Activated T-helper 1 cell treated with anti-CD3 and anti-CD28 coated beads, Interleukin-12 subunit alpha, Interleukin-12 subunit beta, Interleukin-2, Interleukin-4 antibody, amounts not matched to agents 30 ng/mL and 10 ng/mL and 1 ng/mL, durations not matched to agents 14 hours and 24 hours and 36 hours (primary cell): ENCODE measurements at regions of chr12 and their contacts with region 1.

Region 1: DNA sequence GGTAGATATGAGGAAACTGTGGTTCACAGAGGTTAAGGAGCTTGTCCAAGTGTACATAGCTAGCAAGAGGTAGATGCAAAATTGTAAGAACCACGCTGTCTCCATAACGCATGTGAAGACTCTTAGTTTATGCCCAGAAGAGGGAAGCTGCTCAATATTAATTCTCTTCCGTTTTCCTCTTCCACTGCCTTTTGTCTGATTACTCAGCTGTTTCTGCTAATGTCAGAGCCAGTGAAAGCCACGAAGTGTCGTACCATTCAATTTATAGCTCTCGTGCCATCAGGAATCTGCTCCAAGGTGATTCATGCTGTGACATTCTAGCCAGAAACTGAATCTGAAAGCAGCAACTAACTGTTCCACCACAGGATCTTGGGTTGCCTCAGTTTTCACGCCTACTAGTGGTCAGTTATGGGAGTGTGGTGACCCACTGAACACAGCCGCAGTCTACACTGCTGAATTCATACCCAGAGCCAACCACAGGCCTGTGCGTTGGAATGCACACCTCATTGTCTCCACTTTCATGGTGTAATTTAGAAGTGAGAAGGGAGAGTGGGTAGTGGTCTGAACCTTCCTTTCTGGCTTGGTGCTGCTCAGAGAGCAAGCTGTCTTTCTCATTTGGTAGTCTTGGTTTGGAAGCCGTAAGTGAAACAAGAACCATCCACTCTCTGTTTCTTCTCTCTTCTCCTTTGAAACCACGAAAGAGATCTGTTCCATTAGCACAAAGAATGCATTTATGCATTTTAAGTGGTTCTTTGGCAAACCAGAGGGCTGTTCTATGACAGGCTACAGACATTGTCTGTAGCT is 74.2 kb upstream of the NAP1L1 start:
- DNase-seq: peak; percentile 67
- H3K4me3 Mint-ChIP-seq: peak overlapping the region; percentile 47
- H3K27ac Mint-ChIP-seq: peak overlapping the region; percentile 84
- H3K4me1 Mint-ChIP-seq: peaks cover 18% of the 10 kb centered on the region
- H3K27me3 Mint-ChIP-seq: peaks cover 27% of the 10 kb centered on the region

Region 2: GRCh38 chr12:75334384-75335030 is 824.2 kb before region 1 on chr12 and contains the start of gene GLIPR1L1:
- intact Hi-C with region 1: loop called (anchors 10 kb)
- DNase-seq: peak; percentile 67
- H3K4me3 Mint-ChIP-seq: peak within 1 kb of the TSS; percentile 70
- H3K27ac Mint-ChIP-seq: no peak within 1 kb of the TSS
- H3K4me1 Mint-ChIP-seq: peaks cover 36% of the 10 kb centered on the region
- H3K27me3 Mint-ChIP-seq: peaks cover 35% of the 10 kb centered on the region
- total RNA-seq, gene GLIPR1L1: not detected in 2 replicates

Region 3: DNA sequence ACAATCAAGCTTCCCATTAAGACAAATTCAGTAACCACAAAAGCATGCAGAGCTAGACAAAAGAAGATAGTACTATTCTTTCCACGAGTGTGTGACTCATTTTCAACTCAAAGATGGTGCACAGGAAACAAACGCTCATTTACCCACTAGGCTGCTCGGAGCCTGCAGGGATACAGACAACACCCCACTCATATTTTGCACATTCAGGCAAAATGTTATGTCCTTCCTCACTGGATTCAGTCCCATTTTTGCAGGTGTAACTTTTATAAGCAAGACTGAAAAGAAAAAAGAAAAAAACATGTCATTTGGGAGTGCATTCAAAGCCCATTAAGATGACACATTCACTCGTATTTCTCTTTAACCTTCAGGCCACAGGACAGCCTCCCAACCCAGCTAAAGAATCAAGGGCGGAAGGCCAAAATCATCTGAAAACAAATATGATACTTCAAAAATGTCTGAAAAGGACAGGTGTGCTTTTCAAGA is 499.8 kb before region 1 on chr12:
- intact Hi-C with region 1: loop called (anchors 2 kb)
- DNase-seq: no peak
- H3K4me3 Mint-ChIP-seq: no peak overlapping the region
- H3K27ac Mint-ChIP-seq: peak overlapping the region; percentile 33
- H3K4me1 Mint-ChIP-seq: peaks cover 36% of the 10 kb centered on the region
- H3K27me3 Mint-ChIP-seq: no peaks in the 10 kb centered on the region

Region 4: DNA sequence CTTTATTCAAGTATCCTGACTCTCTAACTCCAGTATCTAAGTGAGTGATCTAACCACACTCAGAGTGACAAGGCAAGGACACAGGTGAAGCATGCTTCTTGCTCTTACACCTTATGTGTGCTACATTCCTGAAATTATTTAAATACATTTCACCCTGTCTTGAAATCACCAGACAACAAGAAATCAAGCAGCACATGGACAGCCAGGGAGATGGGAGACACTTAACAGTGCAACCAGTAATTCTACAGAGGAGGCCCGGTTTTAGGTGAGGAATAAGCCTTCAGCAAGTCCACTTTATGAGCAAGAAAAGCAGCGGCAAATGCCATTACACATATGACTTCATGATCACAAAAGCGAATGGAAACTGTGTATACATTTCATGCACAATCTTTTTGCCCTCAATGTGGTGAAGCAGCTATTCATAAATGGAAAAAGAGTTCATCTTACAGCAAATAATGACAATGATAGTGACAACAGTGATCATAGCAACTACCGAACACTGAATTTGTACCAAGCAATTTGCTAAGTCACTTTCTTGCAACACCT is 164.5 kb before region 1 on chr12:
- intact Hi-C with region 1: loop called (anchors 1 kb)
- DNase-seq: no peak
- H3K4me3 Mint-ChIP-seq: peak overlapping the region; percentile 5
- H3K27ac Mint-ChIP-seq: peak overlapping the region; percentile 88
- H3K4me1 Mint-ChIP-seq: peaks cover 49% of the 10 kb centered on the region
- H3K27me3 Mint-ChIP-seq: no peaks in the 10 kb centered on the region

Region 5: GRCh38 chr12:76123451-76124212 is 35.1 kb before region 1 on chr12:
- intact Hi-C with region 1: no loop called
- DNase-seq: no peak
- H3K4me3 Mint-ChIP-seq: no peak overlapping the region
- H3K27ac Mint-ChIP-seq: no peak overlapping the region
- H3K4me1 Mint-ChIP-seq: no peaks in the 10 kb centered on the region
- H3K27me3 Mint-ChIP-seq: peaks cover 4% of the 10 kb centered on the region

Region 6: GRCh38 chr12:76183459-76184186 is 24.9 kb after region 1 on chr12:
- intact Hi-C with region 1: loop called (anchors 1 kb)
- DNase-seq: no peak
- H3K4me3 Mint-ChIP-seq: no peak overlapping the region
- H3K27ac Mint-ChIP-seq: no peak overlapping the region
- H3K4me1 Mint-ChIP-seq: peaks cover 14% of the 10 kb centered on the region
- H3K27me3 Mint-ChIP-seq: peaks cover 36% of the 10 kb centered on the region

Region 7: GRCh38 chr12:76559400-76560085 is 400.8 kb after region 1 on chr12 and contains the start of gene OSBPL8:
- intact Hi-C with region 1: loop called (anchors 1 kb)
- DNase-seq: peak; percentile 91
- H3K4me3 Mint-ChIP-seq: peak within 1 kb of the TSS; percentile 94
- H3K27ac Mint-ChIP-seq: peak within 1 kb of the TSS; percentile 98
- H3K4me1 Mint-ChIP-seq: peaks cover 49% of the 10 kb centered on the region
- H3K27me3 Mint-ChIP-seq: no peaks in the 10 kb centered on the region
- total RNA-seq, gene OSBPL8: 86.9 and 95.9 TPM in 2 replicates

Region 8: DNA sequence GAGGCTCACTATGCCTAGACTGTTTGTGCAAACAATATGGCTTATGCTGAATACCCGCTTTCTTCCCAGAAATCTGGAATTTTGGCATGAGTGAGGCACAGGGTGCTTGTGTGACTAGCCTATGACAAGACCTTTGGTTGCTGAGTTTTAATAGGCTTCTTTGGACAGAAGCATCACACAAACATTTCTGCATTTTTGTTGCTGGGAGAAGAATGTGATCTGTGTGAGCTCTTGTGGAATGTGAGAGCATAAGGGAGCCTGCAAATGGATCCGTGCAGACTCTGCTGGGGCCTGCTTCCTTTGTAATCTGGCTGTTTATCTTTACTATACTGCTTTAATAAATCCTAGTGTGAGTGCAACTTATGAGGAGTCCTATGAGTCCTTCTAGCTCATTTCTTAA is 522.2 kb after region 1 on chr12:
- intact Hi-C with region 1: no loop called
- DNase-seq: no peak
- H3K4me3 Mint-ChIP-seq: no peak overlapping the region
- H3K27ac Mint-ChIP-seq: no peak overlapping the region
- H3K4me1 Mint-ChIP-seq: no peaks in the 10 kb centered on the region
- H3K27me3 Mint-ChIP-seq: peaks cover 5% of the 10 kb centered on the region